ENCODE measurements at regions of chr12 and their contacts with region 1.

Region 1: GRCh38 chr12:6937481-6938297 is 5.9 kb upstream of the RNU7-1 start:
- DNase-seq: peak; percentile 93
- ATAC-seq: peak; percentile 86 to 93 (median 88)
- H3K4me3 ChIP-seq: peak overlapping the region; percentile 58 to 96 (median 72)
- H3K27ac ChIP-seq: peak overlapping the region; percentile 91 to 98 (median 94)
- H3K4me1 ChIP-seq: peaks cover 19 to 85% (median 66%) of the 10 kb centered on the region in 9 donors
- H3K27me3 ChIP-seq: no peaks in the 10 kb centered on the region
- CTCF ChIP-seq: peak; percentile 91 to 99 (median 97)

Region 2: DNA sequence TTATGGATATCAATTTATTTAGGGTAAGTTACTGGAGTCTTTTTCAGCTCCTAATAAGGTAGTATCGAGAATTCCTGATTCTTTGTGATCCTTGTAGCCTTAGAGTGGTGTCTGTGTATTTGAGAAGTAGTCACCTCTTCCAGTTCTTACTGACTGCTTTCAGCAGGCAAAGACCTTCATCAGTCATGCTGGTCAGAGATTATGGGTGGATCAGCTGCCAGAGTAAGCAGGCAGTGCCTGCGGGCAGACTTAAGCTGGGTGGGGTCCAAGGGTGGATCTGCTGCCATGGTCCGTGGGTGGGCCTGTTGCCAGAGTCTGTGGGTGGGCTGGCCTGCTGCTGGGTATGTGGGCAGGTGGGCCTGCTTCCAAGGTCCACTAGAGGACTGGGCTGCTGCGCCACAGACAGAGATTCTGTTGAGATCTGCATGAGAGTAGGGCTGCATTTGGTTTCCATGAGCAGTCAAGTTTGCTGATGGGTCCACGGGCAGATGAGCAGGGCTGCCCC is 1181.3 kb before region 1 on chr12:
- intact Hi-C with region 1: no loop called
- DNase-seq: no peak
- ATAC-seq: no peak
- H3K4me3 ChIP-seq: no peak overlapping the region
- H3K27ac ChIP-seq: no peak overlapping the region
- H3K4me1 ChIP-seq: no peaks in the 10 kb centered on the region
- H3K27me3 ChIP-seq: peaks cover 0 to 9% (median 0%) of the 10 kb centered on the region in 7 donors
- CTCF ChIP-seq: no peak

Region 3: DNA sequence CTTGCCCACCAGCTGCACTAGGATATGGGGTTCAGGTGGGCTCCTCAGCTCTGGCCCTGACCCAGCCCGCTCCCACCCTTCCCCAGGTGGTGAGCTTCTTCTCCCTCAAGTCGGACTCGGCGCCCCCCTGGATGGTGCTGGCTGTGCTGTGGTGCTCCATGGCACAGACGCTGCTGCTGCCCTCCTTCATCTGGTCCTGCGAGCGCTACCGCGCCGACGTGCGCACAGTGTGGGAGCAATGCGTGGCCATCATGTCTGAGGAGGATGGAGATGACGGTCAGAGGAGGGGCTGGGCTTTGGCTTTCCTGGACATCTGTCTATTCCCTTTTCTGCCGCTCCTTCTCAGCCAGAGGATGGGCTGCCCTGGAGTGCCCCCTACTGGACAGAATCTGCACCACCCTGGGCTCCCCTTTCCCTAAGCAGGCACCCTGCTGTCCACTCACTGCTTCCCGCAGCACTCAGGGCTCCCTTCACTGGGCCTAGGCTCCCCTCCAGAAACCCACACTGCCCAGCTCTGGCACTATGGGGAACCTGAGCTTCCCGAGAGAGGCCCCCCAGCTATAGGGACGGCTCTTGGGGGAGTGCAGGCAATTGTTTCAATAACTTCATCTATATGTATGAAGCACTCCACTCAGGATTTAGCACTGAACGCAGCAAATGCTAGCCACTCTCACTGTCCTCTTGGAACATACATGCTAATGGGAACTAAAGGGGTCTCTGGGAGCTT is 112.1 kb before region 1 on chr12:
- intact Hi-C with region 1: no loop called
- DNase-seq: peak; percentile 87 to 89
- ATAC-seq: peak; percentile 54 to 73 (median 62)
- H3K4me3 ChIP-seq: peak overlapping the region in 5 of 10 donors; percentile 17 to 39 (median 25)
- H3K27ac ChIP-seq: peak overlapping the region in 1 of 10 donors; percentile 18
- H3K4me1 ChIP-seq: peaks cover 15 to 65% (median 45%) of the 10 kb centered on the region in 9 donors
- H3K27me3 ChIP-seq: peaks cover 0 to 59% (median 0%) of the 10 kb centered on the region in 7 donors
- CTCF ChIP-seq: peak; percentile 80 to 97 (median 95)

Region 4: GRCh38 chr12:6867413-6868210 is 70.1 kb before region 1 on chr12 and contains the start of gene TPI1:
- intact Hi-C with region 1: loop called in 2 of 10 experiments (anchors 5 to 10 kb)
- DNase-seq: peak; percentile 86 to 89
- ATAC-seq: peak; percentile 81 to 93 (median 88)
- H3K4me3 ChIP-seq: peak within 1 kb of the TSS; percentile 81 to 100 (median 98)
- H3K27ac ChIP-seq: peak within 1 kb of the TSS; percentile 93 to 100 (median 100)
- H3K4me1 ChIP-seq: peaks cover 32 to 53% (median 49%) of the 10 kb centered on the region in 9 donors
- H3K27me3 ChIP-seq: no peaks in the 10 kb centered on the region
- CTCF ChIP-seq: peak in 4 of 9 donors; percentile 11 to 24 (median 20)
- total RNA-seq, gene TPI1: 739 to 1,044 (median 839) TPM

Measured in heart right ventricle (tissue), 16 donors.